CD8-positive, alpha-beta memory T cell (primary cell): ENCODE measurements at regions of chr19 and their contacts with region 1.

Region 1: GRCh38 chr19:40633207-40633606 is 32.0 kb downstream of the LTBP4 start:
- DNase-seq: no peak
- H3K4me3 ChIP-seq: no peak overlapping the region
- H3K4me3 Mint-ChIP-seq: no peak overlapping the region
- H3K27ac ChIP-seq: no peak overlapping the region
- H3K27ac Mint-ChIP-seq: no peak overlapping the region
- H3K4me1 ChIP-seq: no peaks in the 10 kb centered on the region
- H3K4me1 Mint-ChIP-seq: peaks cover 0 to 8% (median 5%) of the 10 kb centered on the region in 3 donors
- H3K27me3 ChIP-seq: no peaks in the 10 kb centered on the region
- H3K27me3 Mint-ChIP-seq: peaks cover 2 to 6% of the 10 kb centered on the region in 2 donors

Region 2: DNA sequence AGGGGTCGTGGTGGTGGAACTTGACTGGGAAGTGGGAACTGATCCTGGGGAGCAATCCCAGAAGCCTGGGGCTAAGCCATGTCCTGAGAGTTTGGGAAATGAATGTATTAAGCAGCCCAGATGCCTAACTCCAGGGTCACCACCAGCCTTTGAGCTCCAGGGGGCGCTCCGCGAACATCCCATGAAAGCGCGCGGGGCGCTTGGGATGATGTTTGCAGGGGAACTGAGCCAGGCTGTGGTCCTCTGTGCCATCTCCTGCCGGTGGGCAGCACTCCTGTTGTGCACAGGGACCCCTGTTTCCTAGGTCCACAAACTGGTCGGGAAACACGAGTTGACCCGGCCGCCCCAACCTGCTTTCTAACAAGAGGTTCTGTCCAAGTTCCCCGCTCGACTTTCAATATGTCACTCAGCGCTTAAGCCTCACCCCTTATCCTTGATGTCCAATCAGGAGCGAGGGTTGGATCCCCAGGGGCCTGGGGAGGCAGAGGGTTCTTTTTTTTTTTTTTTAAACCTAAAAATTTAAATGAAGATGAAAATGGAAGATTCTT is 840.1 kb before region 1 on chr19:
- CTCF ChIA-PET with region 1: no interaction called
- POLR2A ChIA-PET with region 1: no interaction called
- DNase-seq: peak; percentile 59 to 79 (median 63)
- H3K4me3 ChIP-seq: peak overlapping the region; percentile 68
- H3K4me3 Mint-ChIP-seq: peak overlapping the region; percentile 66 to 91 (median 81)
- H3K27ac ChIP-seq: no peak overlapping the region
- H3K27ac Mint-ChIP-seq: peak overlapping the region in 3 of 8 donors; percentile 6 to 64 (median 61)
- H3K4me1 ChIP-seq: no peaks in the 10 kb centered on the region
- H3K4me1 Mint-ChIP-seq: peaks cover 0 to 7% (median 3%) of the 10 kb centered on the region in 3 donors
- H3K27me3 ChIP-seq: no peaks in the 10 kb centered on the region
- H3K27me3 Mint-ChIP-seq: peaks cover 3 to 5% of the 10 kb centered on the region in 2 donors

Region 3: DNA sequence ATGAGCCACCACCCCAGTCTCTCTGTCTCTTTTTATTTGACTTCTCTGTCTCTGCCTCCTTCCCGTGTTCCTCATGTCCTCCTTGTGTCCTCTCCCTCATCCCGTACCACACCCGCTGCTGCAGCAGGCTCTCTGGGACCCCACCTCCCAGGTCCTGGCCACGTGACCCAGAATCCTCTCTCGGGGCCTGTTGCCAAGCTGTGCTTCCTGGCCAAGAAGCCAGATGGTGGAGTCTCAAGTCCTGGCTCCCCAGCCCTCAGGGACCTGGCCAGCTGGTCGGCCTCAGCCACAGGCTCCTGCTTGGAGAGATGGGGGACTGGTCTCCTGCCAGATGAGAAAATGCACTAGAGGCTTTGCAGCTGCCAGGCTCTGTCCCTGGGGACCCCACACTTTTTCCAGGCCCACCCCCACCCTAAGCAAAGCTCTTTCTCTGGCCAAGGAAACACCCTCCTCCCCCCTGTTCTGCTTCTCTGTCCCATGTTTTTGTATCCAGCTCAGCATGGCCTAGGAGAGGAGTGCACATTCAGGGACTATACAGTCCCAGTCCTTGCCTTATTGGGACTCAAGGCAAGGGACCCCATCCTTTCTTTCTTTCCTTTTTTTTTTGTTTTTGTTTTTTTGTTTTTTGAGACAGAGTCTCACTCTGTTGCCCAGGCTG is 90.9 kb before region 1 on chr19:
- CTCF ChIA-PET with region 1: interaction called, 22 read pairs
- POLR2A ChIA-PET with region 1: no interaction called
- DNase-seq: no peak
- H3K4me3 ChIP-seq: no peak overlapping the region
- H3K4me3 Mint-ChIP-seq: no peak overlapping the region
- H3K27ac ChIP-seq: no peak overlapping the region
- H3K27ac Mint-ChIP-seq: peak overlapping the region in 1 of 8 donors; percentile 38
- H3K4me1 ChIP-seq: no peaks in the 10 kb centered on the region
- H3K4me1 Mint-ChIP-seq: no peaks in the 10 kb centered on the region
- H3K27me3 ChIP-seq: no peaks in the 10 kb centered on the region
- H3K27me3 Mint-ChIP-seq: peaks cover 4 to 15% of the 10 kb centered on the region in 2 donors

Region 4: DNA sequence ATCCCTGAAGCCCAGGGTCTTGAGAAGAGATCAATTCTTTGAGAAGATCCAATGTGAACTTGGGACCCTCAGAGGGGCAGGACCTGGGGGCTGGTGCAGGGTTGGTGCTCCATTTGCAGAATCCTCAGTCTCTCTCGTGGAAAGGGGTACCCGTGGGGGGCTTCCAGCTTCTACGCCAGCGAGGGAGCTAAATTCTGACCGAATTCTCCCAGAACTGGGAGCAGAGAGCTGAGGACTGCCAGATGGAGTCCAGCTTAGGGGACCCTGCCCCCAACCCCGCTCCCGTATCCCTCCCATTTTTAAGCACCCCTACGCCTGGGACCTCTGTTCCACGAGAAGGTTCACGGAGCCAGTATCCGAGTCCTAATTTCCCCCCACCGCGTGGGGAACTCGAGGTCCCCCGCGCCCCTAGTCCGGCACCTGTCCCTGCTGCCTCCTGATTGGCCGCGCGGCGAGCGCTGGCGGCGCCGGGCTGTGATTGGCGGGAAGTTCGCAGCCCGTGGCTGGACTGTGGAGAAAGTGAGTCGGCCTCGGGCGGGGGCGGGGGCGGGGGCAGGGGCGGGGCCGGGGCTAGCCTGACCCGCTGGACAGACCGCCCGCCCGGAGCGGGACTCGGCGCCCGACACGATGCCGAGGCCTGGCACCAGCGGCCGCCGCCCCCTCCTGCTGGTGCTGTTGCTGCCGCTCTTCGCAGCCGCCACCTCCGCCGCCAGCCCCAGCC is 36.4 kb before region 1 on chr19:
- CTCF ChIA-PET with region 1: interaction called, 98 read pairs
- POLR2A ChIA-PET with region 1: no interaction called
- DNase-seq: peak in 1 of 5 donors; percentile 43
- H3K4me3 ChIP-seq: no peak overlapping the region
- H3K4me3 Mint-ChIP-seq: no peak overlapping the region
- H3K27ac ChIP-seq: peak overlapping the region; percentile 51
- H3K27ac Mint-ChIP-seq: no peak overlapping the region
- H3K4me1 ChIP-seq: peaks cover 42% of the 10 kb centered on the region
- H3K4me1 Mint-ChIP-seq: peaks cover 38 to 48% (median 41%) of the 10 kb centered on the region in 3 donors
- H3K27me3 ChIP-seq: peaks cover 40% of the 10 kb centered on the region
- H3K27me3 Mint-ChIP-seq: peaks cover 32 to 35% of the 10 kb centered on the region in 2 donors

Region 5: DNA sequence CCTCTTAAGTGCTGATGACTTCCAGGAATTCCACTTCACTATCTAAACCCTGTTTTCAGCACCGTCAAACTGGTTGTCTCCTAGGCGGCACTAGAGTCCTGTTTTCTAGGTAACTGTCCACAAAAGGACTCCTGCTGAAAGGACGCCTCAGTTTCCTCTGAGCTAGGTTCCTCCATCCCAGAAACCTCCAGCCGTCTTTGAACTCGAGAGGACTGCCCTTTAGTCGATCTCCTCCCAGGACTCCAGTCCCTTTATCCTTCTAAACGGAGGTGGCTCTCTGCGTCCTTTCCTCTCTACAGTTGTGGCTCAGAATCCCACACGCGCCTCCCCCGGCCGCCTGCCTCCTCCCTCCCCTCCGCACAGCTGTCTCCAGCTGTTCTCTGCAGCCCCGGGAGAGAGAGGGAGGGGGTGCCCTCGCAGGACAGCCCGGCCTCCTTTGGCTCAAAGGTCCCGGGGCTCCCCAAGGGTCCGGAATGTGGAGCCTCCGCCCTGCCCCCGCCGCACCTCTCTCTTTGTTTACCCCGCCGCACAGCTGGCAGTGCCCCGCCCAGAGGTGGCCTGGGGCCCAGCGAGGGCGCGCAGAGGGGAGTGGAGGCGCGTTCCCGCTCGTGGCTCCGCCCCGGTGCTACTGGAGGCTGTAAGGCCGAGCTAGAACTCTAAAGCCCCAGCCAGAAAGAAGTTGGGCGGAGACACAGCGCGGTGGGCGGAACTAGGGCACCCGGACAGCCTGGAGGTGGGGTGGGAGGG is 29.6 kb before region 1 on chr19:
- CTCF ChIA-PET with region 1: interaction called, 98 read pairs
- POLR2A ChIA-PET with region 1: no interaction called
- DNase-seq: peak; percentile 90 to 97 (median 97)
- H3K4me3 ChIP-seq: peak overlapping the region; percentile 80
- H3K4me3 Mint-ChIP-seq: peak overlapping the region; percentile 87 to 95 (median 88)
- H3K27ac ChIP-seq: peak overlapping the region; percentile 73
- H3K27ac Mint-ChIP-seq: peak overlapping the region; percentile 63 to 99 (median 95)
- H3K4me1 ChIP-seq: peaks cover 74% of the 10 kb centered on the region
- H3K4me1 Mint-ChIP-seq: peaks cover 54 to 90% (median 66%) of the 10 kb centered on the region in 3 donors
- H3K27me3 ChIP-seq: peaks cover 29% of the 10 kb centered on the region
- H3K27me3 Mint-ChIP-seq: peaks cover 27% of the 10 kb centered on the region in 2 donors

Region 6: DNA sequence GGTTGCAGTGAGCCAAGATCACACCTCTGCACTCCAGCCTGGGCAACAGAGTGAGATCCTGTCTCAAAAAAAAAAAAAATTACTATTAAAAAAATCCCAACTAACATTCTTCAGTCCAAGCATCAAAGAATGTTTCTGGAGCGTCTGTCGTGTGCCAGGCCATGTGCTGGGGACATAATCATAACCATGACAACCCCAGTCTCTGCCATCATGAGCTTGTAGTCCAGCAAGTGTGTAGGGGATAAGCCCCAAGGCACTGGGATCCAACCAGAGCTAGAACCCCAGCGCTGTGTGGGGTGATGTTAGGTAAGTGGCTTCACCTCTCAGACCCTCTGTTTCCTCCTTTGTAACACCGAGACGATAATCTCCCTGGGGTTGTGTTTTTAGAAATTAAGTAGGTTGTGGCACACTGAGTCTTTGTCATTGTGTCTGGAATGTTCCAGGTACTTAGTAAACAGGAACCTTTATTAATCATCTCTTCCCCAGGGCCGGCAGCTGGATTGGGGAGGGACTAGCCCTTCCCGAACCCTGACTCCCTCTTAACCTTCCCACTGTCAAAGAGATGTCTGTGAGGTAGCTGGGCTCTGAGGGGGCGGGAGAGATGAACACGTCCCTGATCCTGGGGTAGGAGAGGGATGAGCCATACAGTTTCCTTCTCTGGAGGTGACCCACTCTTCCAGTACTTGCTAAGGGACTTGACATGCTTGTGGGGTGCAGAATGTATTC is 88.9 kb after region 1 on chr19:
- CTCF ChIA-PET with region 1: no interaction called
- POLR2A ChIA-PET with region 1: no interaction called
- DNase-seq: no peak
- H3K4me3 ChIP-seq: no peak overlapping the region
- H3K4me3 Mint-ChIP-seq: peak overlapping the region in 1 of 7 donors; percentile 40
- H3K27ac ChIP-seq: no peak overlapping the region
- H3K27ac Mint-ChIP-seq: peak overlapping the region in 2 of 8 donors; percentile 33 to 52
- H3K4me1 ChIP-seq: peaks cover 37% of the 10 kb centered on the region
- H3K4me1 Mint-ChIP-seq: peaks cover 35 to 61% (median 60%) of the 10 kb centered on the region in 3 donors
- H3K27me3 ChIP-seq: no peaks in the 10 kb centered on the region
- H3K27me3 Mint-ChIP-seq: peaks cover 0 to 2% of the 10 kb centered on the region in 2 donors